ENCODE measurements at regions of chr16 and their contacts with region 1.

Region 1: GRCh38 chr16:20774703-20775362 is 11.0 kb downstream of the ACSM3 start:
- DNase-seq: peak; percentile 9
- ATAC-seq: peak; percentile 100
- H3K4me3 ChIP-seq: no peak overlapping the region
- H3K27ac ChIP-seq: no peak overlapping the region
- H3K4me1 ChIP-seq: no peaks in the 10 kb centered on the region
- H3K27me3 ChIP-seq: no peaks in the 10 kb centered on the region
- CTCF ChIP-seq: peak; percentile 82 to 92 (median 92)
- EP300 ChIP-seq: no peak
- POLR2A ChIP-seq: no peak
- RAD21 ChIP-seq: peak; percentile 54

Region 2: GRCh38 chr16:20327444-20328041 is 447.3 kb before region 1 on chr16 and contains the start of gene GP2:
- CTCF ChIA-PET with region 1: no interaction called
- POLR2A ChIA-PET with region 1: no interaction called
- RAD21 ChIA-PET with region 1: no interaction called
- SMC1A ChIA-PET with region 1: no interaction called
- in situ Hi-C with region 1: no loop called
- intact Hi-C with region 1: no loop called
- DNase-seq: no peak
- ATAC-seq: no peak
- H3K4me3 ChIP-seq: no peak within 1 kb of the TSS
- H3K27ac ChIP-seq: no peak within 1 kb of the TSS
- H3K4me1 ChIP-seq: no peaks in the 10 kb centered on the region
- H3K27me3 ChIP-seq: no peaks in the 10 kb centered on the region; a peak in 1 of 4 replicates
- CTCF ChIP-seq: no peak
- EP300 ChIP-seq: no peak
- POLR2A ChIP-seq: no peak
- RAD21 ChIP-seq: no peak
- polyA plus RNA-seq, gene GP2: not detected

Region 3: DNA sequence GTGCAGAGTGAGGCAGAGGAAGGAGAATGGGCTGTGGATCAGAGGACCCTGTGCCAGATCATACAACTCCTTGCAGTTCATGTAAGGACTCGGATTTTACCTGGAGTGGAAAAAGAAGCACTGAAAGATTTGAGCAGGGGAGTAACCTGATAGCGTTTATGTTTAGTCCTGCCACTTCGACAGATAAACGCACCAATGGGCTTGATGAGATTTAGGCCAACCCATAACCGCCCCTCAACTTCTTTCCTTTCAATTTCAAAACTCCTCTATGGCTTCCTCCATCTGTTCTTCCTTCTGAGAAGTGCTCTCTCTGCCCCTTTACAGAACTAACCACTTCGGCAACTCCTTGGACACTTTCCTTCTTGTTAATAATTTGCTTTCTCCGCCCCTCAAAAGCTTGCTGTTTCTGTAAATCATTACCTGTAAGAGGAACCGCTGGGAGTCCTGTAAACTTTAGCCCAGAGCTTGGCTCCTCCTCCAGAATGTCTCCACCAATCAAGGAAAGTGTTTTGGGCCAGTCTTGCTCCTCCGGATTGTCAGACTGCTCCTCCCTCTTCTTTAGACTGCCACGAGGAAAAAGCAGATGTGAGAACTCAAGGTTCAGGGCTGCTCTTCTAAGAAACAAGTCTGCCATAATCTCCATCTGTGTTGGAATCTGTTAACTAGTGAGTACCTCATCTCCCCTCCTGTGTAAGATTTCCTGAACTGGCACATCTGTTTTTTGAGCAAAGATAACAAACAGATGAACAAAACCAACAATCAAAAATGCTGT is 11.2 kb before region 1 on chr16 and contains the start of gene ACSM3:
- CTCF ChIA-PET with region 1: interaction called, 44 read pairs
- POLR2A ChIA-PET with region 1: interaction called, 5 read pairs
- RAD21 ChIA-PET with region 1: no interaction called
- SMC1A ChIA-PET with region 1: interaction called, 7 read pairs
- in situ Hi-C with region 1: no loop called
- intact Hi-C with region 1: no loop called
- DNase-seq: peak; percentile 93
- ATAC-seq: peak; percentile 100
- H3K4me3 ChIP-seq: peak within 1 kb of the TSS; percentile 59
- H3K27ac ChIP-seq: peak within 1 kb of the TSS; percentile 62
- H3K4me1 ChIP-seq: peaks cover 2% of the 10 kb centered on the region; the same call in 1 of the 2 replicates
- H3K27me3 ChIP-seq: no peaks in the 10 kb centered on the region
- CTCF ChIP-seq: no peak
- EP300 ChIP-seq: no peak
- POLR2A ChIP-seq: no peak
- RAD21 ChIP-seq: no peak
- polyA plus RNA-seq, gene ACSM3: 5.0 to 6.8 TPM

Region 4: GRCh38 chr16:20791923-20792612 is 17.2 kb after region 1 on chr16:
- CTCF ChIA-PET with region 1: interaction called, 36 read pairs
- POLR2A ChIA-PET with region 1: interaction called, 4 read pairs
- RAD21 ChIA-PET with region 1: interaction called, 3 read pairs
- SMC1A ChIA-PET with region 1: interaction called, 14 read pairs
- in situ Hi-C with region 1: no loop called
- intact Hi-C with region 1: no loop called
- DNase-seq: no peak
- ATAC-seq: no peak
- H3K4me3 ChIP-seq: no peak overlapping the region
- H3K27ac ChIP-seq: no peak overlapping the region
- H3K4me1 ChIP-seq: no peaks in the 10 kb centered on the region
- H3K27me3 ChIP-seq: no peaks in the 10 kb centered on the region
- CTCF ChIP-seq: no peak
- EP300 ChIP-seq: no peak
- POLR2A ChIP-seq: no peak
- RAD21 ChIP-seq: no peak

Region 5: DNA sequence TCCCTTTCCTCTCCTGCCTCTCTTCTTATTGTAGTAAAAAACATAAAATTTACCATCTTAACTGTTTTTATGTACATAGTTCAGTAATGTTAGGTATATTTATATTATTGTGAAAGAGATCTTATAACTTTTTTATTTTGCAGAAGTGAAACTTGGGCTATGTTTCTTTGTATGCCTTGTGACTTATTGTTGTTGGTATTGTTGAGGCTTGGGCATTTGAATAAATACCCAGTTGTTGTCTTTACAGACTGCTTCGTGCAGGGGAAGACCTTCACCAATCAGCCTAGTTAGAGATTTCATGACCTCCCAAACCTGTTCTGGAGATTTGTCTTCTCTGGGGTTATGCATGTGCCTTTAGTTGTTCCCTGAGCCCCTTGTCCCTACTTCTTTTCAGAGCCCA is 63.4 kb after region 1 on chr16:
- CTCF ChIA-PET with region 1: no interaction called
- POLR2A ChIA-PET with region 1: no interaction called
- RAD21 ChIA-PET with region 1: no interaction called
- SMC1A ChIA-PET with region 1: no interaction called
- in situ Hi-C with region 1: no loop called
- intact Hi-C with region 1: no loop called
- DNase-seq: no peak
- ATAC-seq: peak; percentile 78
- H3K4me3 ChIP-seq: no peak overlapping the region
- H3K27ac ChIP-seq: no peak overlapping the region
- H3K4me1 ChIP-seq: peaks cover 11% of the 10 kb centered on the region
- H3K27me3 ChIP-seq: no peaks in the 10 kb centered on the region
- CTCF ChIP-seq: no peak
- EP300 ChIP-seq: no peak
- POLR2A ChIP-seq: no peak
- RAD21 ChIP-seq: no peak

Measured in GM12878 (cell line).